ENCODE measurements at regions of chr4 and their contacts with region 1.

Region 1: DNA sequence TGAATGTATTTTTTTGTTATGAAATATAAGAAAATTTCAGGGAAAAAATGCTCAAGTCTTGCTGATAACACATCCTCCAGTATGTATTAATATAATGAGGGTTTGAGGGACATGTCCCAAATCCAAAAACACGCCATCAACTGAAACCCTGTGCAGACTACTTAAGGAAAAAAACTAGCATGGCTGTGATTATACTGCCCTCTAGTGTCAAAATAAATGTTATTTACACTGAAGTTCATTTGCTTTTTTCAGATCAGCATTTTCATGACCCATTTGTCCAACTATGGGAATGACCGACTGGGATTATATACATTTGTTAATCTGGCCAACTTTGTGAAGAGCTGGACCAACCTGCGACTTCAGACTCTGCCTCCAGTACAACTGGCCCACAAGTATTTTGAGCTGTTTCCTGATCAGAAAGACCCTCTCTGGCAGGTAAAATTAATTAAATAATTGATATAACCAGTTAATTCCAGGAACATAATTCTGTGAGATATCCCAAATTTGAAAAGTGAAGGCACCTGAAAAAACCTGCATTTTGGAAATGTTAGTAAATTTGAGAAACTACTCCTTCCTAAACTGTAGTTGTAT is 128.5 kb downstream of the PRSS12 start:
- DNase-seq: peak in 1 of 2 experiments; percentile 13
- H3K4me3 ChIP-seq: no peak overlapping the region
- H3K4me3 Mint-ChIP-seq: no peak overlapping the region
- H3K27ac Mint-ChIP-seq: no peak overlapping the region
- H3K4me1 ChIP-seq: no peaks in the 10 kb centered on the region
- H3K4me1 Mint-ChIP-seq: no peaks in the 10 kb centered on the region
- H3K27me3 ChIP-seq: no peaks in the 10 kb centered on the region
- H3K27me3 Mint-ChIP-seq: peaks cover 3% of the 10 kb centered on the region
- CTCF ChIP-seq: peak; percentile 44 to 60

Region 2: GRCh38 chr4:117796677-117797076 is 427.7 kb before region 1 on chr4:
- CTCF ChIA-PET with region 1: no interaction called
- POLR2A ChIA-PET with region 1: no interaction called
- intact Hi-C with region 1: loop called (anchors 10 kb)
- DNase-seq: no peak
- H3K4me3 ChIP-seq: no peak overlapping the region
- H3K4me3 Mint-ChIP-seq: no peak overlapping the region
- H3K27ac Mint-ChIP-seq: no peak overlapping the region
- H3K4me1 ChIP-seq: no peaks in the 10 kb centered on the region
- H3K4me1 Mint-ChIP-seq: no peaks in the 10 kb centered on the region
- H3K27me3 ChIP-seq: no peaks in the 10 kb centered on the region
- H3K27me3 Mint-ChIP-seq: no peaks in the 10 kb centered on the region
- CTCF ChIP-seq: no peak

Region 3: GRCh38 chr4:118076958-118077766 is 147.2 kb before region 1 on chr4:
- CTCF ChIA-PET with region 1: no interaction called
- POLR2A ChIA-PET with region 1: no interaction called
- intact Hi-C with region 1: loop called (anchors 1 kb)
- DNase-seq: peak; percentile 46 to 48
- H3K4me3 ChIP-seq: no peak overlapping the region
- H3K4me3 Mint-ChIP-seq: no peak overlapping the region
- H3K27ac Mint-ChIP-seq: no peak overlapping the region
- H3K4me1 ChIP-seq: no peaks in the 10 kb centered on the region
- H3K4me1 Mint-ChIP-seq: no peaks in the 10 kb centered on the region
- H3K27me3 ChIP-seq: no peaks in the 10 kb centered on the region
- H3K27me3 Mint-ChIP-seq: peaks cover 4% of the 10 kb centered on the region
- CTCF ChIP-seq: peak; percentile 56 to 70

Region 4: DNA sequence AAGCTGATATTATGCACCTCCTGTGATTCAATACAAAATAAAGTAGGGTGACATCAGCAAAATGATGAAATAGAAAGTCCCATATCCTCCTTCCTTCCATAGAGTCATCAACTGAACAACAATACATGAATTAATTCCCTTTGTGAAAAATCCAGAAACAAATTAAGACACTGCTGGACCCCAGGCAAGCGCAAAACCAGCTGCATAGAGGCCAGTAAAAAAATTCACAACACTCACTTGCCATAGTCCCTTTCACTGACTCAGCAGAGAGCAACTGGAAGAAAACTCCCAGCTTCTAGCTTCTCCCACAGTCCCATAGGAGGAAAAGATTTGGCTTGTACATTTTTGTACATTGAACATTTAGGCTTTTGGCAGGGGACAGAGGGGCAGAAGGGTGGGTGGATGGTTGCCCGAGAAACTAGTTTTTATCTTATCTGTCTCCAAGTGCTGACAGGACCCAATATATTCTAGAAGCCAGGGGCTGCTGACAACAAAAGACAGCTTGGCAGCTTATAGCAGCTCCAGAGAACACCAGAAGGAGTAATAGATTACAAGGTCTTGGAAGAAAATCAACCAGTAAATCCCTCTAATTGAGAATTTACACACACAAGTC is 65.5 kb before region 1 on chr4:
- CTCF ChIA-PET with region 1: no interaction called
- POLR2A ChIA-PET with region 1: no interaction called
- intact Hi-C with region 1: no loop called
- DNase-seq: no peak
- H3K4me3 ChIP-seq: no peak overlapping the region
- H3K4me3 Mint-ChIP-seq: no peak overlapping the region
- H3K27ac Mint-ChIP-seq: no peak overlapping the region
- H3K4me1 ChIP-seq: no peaks in the 10 kb centered on the region
- H3K4me1 Mint-ChIP-seq: no peaks in the 10 kb centered on the region
- H3K27me3 ChIP-seq: no peaks in the 10 kb centered on the region
- H3K27me3 Mint-ChIP-seq: no peaks in the 10 kb centered on the region
- CTCF ChIP-seq: no peak

Region 5: DNA sequence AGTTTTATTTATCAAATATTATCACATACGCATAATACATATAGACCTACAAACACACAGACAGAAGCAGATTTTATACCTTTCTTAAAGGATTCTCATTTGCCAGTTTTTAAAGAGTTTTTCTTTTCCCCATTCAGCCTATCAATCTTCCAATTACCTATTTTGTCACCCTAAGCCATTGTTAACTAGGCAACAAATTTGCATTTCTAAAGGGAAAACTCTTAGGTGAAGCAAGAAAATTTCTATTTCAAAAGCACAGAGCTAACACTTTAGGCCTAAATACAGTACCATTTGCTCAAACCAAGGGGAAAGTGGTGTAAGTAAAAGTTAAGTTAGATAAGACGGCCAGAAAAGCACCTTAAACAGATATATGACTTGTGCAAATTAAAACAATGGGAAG is 33.4 kb before region 1 on chr4:
- CTCF ChIA-PET with region 1: no interaction called
- POLR2A ChIA-PET with region 1: no interaction called
- intact Hi-C with region 1: no loop called
- DNase-seq: no peak
- H3K4me3 ChIP-seq: no peak overlapping the region
- H3K4me3 Mint-ChIP-seq: no peak overlapping the region
- H3K27ac Mint-ChIP-seq: no peak overlapping the region
- H3K4me1 ChIP-seq: no peaks in the 10 kb centered on the region
- H3K4me1 Mint-ChIP-seq: no peaks in the 10 kb centered on the region
- H3K27me3 ChIP-seq: no peaks in the 10 kb centered on the region
- H3K27me3 Mint-ChIP-seq: no peaks in the 10 kb centered on the region
- CTCF ChIP-seq: no peak

Region 6: DNA sequence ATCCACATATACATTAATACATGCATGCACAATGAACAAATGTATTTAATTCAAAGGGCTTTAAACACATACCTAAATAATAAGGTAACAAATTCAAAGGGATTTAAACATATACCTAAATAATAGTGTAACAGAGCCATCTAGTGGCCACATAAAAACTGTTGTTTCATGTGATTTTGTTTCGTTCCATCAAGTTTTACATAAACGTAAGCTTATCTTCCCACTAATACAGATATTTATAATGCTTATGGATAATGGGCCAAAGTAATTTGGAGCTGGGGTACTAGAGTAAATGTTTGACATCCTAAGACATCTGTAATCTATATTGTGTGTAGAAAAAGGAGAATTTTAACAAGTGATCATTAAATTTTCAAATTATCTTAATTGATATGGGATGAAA is 46.2 kb after region 1 on chr4:
- CTCF ChIA-PET with region 1: no interaction called
- POLR2A ChIA-PET with region 1: no interaction called
- intact Hi-C with region 1: loop called (anchors 2 kb)
- DNase-seq: peak in 1 of 2 experiments; percentile 20
- H3K4me3 ChIP-seq: no peak overlapping the region
- H3K4me3 Mint-ChIP-seq: no peak overlapping the region
- H3K27ac Mint-ChIP-seq: no peak overlapping the region
- H3K4me1 ChIP-seq: no peaks in the 10 kb centered on the region
- H3K4me1 Mint-ChIP-seq: no peaks in the 10 kb centered on the region
- H3K27me3 ChIP-seq: no peaks in the 10 kb centered on the region
- H3K27me3 Mint-ChIP-seq: no peaks in the 10 kb centered on the region
- CTCF ChIP-seq: peak; percentile 29 to 36

Region 7: GRCh38 chr4:118338981-118339765 is 114.8 kb after region 1 on chr4:
- CTCF ChIA-PET with region 1: no interaction called
- POLR2A ChIA-PET with region 1: no interaction called
- intact Hi-C with region 1: no loop called
- DNase-seq: no peak
- H3K4me3 ChIP-seq: no peak overlapping the region
- H3K4me3 Mint-ChIP-seq: no peak overlapping the region
- H3K27ac Mint-ChIP-seq: no peak overlapping the region
- H3K4me1 ChIP-seq: no peaks in the 10 kb centered on the region
- H3K4me1 Mint-ChIP-seq: no peaks in the 10 kb centered on the region
- H3K27me3 ChIP-seq: no peaks in the 10 kb centered on the region
- H3K27me3 Mint-ChIP-seq: no peaks in the 10 kb centered on the region
- CTCF ChIP-seq: no peak

Measured in Caco-2 (cell line).